Right ventricle myocardium inferior (tissue), 1 donor: ENCODE measurements at regions of chr7 and their contacts with region 1.

Region 1: DNA sequence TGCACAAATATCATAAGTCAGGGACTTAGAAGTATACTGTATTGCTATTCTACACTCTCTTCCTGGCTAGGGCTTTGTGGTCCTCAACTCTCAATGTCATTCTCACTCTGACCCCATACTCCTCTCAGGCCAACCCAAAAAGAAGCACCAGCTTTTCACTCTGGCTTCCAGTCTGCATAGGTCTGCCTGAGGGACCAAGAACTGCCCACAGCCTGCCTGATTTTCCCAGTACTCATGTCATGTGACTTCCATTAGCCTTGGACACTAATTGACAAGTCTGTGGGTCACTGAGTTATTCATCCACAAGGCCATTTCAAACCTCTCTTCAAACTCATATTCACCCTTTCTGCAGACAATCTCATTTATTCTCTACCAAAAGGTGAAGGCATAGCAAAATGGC is 19.8 kb downstream of the PMPCB start:
- DNase-seq: no peak
- ATAC-seq: no peak

Region 2: DNA sequence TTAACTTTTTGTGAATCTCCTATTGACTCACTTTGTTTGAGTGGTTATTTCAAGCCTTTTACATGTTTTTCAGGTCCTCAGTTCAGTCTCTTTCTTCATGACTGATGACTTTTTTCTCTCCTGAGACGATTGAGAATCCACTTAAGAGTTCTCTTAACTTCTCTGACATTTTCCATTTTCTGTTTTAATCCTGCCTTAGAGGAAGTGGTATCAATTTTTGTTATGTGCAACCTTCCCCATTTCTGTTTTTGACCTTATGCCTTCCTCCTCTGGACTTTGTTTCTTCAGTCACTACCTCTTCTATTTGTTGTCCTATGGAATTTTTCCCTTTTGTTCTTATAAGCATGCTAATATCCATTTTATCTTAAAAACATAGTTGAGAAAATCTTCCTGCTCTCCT is 32.8 kb after region 1 on chr7:
- intact Hi-C with region 1: loop called (anchors 5 kb)
- DNase-seq: no peak
- ATAC-seq: no peak

Region 3: DNA sequence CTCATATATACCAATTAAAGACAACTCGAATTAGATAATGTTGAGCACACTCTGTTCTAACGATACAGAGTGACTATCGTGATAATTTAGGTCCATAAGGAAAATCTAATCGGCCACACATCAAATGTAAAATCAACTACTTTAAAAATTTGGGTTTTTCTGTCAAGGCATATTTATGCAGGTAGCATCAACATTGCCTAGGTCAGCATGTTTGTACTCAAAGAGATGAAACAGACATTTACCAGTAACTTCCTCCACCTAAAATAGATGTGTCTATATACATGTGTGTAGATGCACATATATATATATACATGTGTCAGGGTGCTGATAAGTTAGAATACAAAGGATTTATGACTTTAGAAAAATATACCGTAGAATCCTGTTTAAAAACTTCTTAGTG is 52.4 kb after region 1 on chr7:
- intact Hi-C with region 1: loop called (anchors 5 kb)
- DNase-seq: no peak
- ATAC-seq: no peak